Right ventricle myocardium inferior (tissue), 1 donor: ENCODE measurements at regions of chr11 and their contacts with region 1.

Region 1: GRCh38 chr11:111676878-111677585 is 74.8 kb downstream of the SIK2 start:
- DNase-seq: no peak
- ATAC-seq: no peak

Region 2: DNA sequence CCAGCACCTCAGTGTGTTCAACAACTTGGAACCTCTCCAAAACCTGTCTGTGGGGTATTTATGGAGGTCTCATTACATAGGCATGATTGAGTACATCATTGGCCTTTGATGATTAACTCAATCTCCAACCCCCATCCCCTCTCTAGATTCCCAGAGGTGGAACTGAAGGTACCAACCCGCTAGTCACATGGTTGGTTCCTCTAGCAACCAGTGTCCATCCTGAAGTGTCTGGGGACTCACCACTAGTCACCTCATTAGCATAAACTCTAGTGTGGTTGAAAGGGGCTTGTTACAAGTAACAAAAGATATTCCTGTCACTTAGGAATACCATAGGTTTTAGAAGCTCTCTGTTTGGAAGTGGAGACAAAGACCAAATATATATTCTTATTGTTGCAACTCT is 34.5 kb before region 1 on chr11:
- intact Hi-C with region 1: loop called (anchors 5 kb)
- DNase-seq: no peak
- ATAC-seq: no peak

Region 3: DNA sequence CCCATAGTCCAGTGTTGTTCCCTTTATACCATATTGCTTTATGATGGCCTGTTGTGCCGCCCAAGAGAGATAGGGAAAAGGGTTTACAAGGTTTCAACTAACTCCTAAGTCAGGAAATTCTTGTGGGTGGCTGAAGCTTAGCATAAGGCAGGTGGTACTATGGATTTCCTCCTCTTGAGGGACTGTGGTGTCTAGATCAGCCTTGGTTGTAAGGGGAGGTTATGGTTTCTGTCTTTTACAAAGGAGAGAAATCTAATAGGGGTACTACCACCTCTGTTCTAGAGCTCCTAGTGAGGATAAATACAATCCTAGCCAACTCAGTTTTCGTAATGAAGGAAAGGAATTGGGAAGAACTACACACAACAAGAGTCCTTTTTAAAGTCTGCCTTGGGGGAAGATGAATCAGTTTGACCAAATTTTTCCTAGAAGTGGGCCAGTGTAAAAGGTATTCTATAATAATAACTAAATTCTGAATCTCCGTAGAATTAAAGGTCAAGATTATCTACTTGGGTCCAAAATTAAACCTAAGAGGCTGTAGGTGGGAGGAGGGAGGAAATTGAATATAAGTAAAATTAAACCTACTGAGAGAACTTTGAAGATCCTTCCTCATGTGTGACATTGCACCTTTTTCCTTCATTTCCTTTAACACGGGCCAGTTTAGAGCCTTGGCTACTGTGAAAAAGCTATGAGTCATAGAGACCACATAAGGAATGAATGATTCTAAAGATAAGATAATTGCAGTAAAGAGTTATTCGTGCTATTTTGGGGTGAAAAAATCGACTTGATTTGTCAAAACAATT is 365.3 kb after region 1 on chr11:
- intact Hi-C with region 1: no loop called
- DNase-seq: no peak
- ATAC-seq: no peak